Mammary epithelial cell (primary cell): ENCODE measurements at regions of chr10 and their contacts with region 1.

Region 1: DNA sequence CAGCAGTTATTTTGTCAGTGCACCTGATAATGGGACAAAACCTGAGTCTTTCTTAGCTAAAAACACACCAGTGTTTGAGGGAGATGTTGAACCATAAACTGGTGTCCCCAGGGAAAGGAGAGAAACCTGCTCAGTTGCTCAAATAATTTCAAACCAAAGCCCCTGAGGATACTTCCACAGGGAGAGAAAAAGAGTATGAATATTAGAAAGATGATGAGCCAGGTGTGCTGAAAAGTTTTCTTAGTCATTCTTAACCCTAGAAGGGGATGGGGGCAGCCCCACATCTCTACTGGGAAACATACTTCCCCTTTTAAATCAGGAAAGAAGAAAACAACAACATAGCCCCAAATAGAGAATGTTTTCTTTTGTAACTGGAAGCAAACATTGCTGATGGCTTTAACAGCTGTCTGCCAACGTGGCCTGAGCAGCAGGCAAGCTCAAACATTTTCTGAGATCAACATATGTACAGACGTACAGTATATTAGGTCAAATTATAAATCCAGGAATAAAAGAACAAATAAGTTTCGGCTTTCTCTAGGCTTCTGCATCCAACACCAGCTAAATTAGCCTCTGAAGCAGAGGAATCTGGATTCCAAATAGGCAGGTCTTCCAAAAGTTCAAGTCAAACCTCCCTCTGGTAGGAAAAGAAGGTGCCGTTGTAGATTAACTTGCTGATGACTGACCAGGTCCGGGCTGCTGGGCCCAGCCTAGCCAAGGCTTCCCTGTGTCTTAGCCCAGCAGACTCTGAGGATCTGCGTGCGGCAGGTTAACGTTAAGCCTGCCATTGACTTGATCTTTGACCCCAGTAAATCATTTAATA is 30.5 kb upstream of the FBXW4 start:
- DNase-seq: no peak
- H3K4me3 ChIP-seq: no peak overlapping the region
- H3K27ac ChIP-seq: no peak overlapping the region
- H3K4me1 ChIP-seq: no peaks in the 10 kb centered on the region
- H3K27me3 ChIP-seq: peaks cover 2% of the 10 kb centered on the region
- CTCF ChIP-seq: no peak

Region 2: DNA sequence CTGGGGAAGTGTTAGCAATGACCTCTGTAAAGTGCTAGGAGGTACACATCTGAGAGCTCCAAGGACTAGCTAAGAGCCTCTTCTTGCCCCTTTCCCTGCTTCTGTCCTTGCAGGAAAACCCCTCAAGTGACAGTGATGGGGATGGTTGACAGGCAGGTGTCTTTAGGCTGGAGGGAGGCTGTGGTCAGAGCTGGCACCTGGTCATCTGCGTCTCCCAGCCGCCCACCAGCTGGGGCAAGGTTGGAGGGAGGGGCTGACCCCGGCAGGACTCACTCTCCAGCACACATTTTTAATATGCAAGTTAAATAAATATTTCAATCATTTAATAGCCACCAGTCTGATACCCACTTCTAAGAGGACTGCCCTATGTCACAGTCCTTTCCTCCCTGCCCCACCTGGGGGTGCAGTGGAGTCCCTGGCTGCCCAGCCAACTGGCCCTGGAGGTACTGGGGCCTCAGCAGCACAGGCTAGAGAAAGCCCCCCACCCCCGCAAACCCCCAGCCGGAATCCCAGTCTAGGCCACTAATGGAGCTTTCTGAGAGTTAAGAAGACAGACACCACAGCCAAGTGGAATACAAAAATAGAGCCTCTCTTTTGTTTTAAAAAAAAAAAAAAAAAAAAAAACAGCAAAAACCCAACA is 44.2 kb after region 1 on chr10:
- CTCF ChIA-PET with region 1: no interaction called
- dilution Hi-C with region 1: loop called (anchors 5 kb)
- in situ Hi-C with region 1: no loop called
- intact Hi-C with region 1: no loop called
- DNase-seq: no peak
- H3K4me3 ChIP-seq: no peak overlapping the region
- H3K27ac ChIP-seq: no peak overlapping the region
- H3K4me1 ChIP-seq: no peaks in the 10 kb centered on the region
- H3K27me3 ChIP-seq: peaks cover 13% of the 10 kb centered on the region
- CTCF ChIP-seq: no peak

Region 3: DNA sequence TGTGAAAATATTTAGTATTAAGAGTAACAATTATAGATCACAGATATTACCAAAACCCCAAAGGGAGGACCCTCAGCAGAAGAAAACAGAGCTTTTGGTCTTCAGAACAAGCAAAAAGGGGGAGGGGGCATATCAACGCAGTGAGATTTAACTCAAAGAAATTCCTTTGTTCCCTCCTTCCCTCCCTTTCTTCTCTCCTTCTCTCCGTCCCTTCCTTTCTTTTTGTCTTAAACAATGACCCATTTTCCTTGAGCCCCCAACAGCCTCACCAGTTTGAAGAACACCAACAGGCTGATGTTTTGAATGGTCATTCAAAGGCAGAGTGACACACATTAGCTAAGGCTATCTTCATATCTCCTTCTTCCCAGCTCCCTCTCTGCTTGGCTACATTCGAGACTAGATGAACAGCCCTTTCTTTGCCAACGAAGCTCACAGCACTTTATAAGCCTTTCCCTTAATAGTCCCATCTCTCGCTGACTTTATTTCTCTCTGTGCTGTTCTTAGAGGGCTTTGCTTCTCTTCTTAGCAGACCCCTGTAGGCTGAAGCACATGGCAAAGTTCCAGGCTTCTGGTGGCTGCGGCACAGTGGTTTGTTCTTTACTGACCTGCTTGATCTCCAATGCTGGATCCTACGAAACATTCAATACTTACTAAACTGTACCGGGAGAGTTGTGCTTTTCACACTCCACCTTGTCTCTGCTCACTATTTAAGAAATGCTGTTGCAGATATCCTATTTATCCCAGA is 193.7 kb after region 1 on chr10:
- CTCF ChIA-PET with region 1: no interaction called
- dilution Hi-C with region 1: no loop called
- in situ Hi-C with region 1: no loop called
- intact Hi-C with region 1: no loop called
- DNase-seq: no peak
- H3K4me3 ChIP-seq: no peak overlapping the region
- H3K27ac ChIP-seq: no peak overlapping the region
- H3K4me1 ChIP-seq: no peaks in the 10 kb centered on the region
- H3K27me3 ChIP-seq: no peaks in the 10 kb centered on the region
- CTCF ChIP-seq: no peak